ENCODE measurements at regions of chr10 and their contacts with region 1.

Region 1: GRCh38 chr10:111076191-111076681 is 593 bp upstream of the ADRA2A start:
- DNase-seq: peak; percentile 25
- ATAC-seq: peak; percentile 86
- H3K4me3 ChIP-seq: peak overlapping the region; percentile 43 to 64
- H3K27ac ChIP-seq: no peak overlapping the region
- H3K4me1 ChIP-seq: no peaks in the 10 kb centered on the region; the same call in 1 of the 2 replicates
- H3K27me3 ChIP-seq: peaks cover 31% of the 10 kb centered on the region
- CTCF ChIP-seq: peak; percentile 97

Region 2: DNA sequence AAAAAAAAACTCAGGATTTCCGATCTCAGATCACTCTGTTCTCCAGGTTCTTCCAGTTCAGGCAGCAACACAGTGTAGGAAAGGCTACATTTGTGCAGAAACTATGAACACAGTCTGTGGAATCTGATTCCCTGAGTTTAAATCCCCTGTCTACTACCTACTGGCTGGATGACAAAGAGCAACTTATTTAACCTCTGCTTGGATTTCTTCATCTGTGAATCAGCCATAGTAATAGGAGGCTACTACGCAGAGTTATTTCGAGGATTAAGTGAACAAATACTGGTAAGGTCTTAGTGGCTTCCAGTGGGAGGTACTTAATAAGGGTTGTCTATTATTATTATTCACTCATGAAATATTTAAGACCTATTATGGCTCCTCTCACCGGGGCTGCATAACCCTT is 248.8 kb before region 1 on chr10:
- CTCF ChIA-PET with region 1: no interaction called
- POLR2A ChIA-PET with region 1: no interaction called
- in situ Hi-C with region 1: no loop called
- intact Hi-C with region 1: no loop called
- DNase-seq: no peak
- ATAC-seq: no peak
- H3K4me3 ChIP-seq: no peak overlapping the region
- H3K27ac ChIP-seq: no peak overlapping the region
- H3K4me1 ChIP-seq: no peaks in the 10 kb centered on the region
- H3K27me3 ChIP-seq: peaks cover 3% of the 10 kb centered on the region
- CTCF ChIP-seq: no peak

Region 3: GRCh38 chr10:111360260-111360925 is 284.2 kb after region 1 on chr10:
- CTCF ChIA-PET with region 1: no interaction called
- POLR2A ChIA-PET with region 1: no interaction called
- in situ Hi-C with region 1: no loop called
- intact Hi-C with region 1: loop called (anchors 5 kb)
- DNase-seq: peak; percentile 17
- ATAC-seq: peak; percentile 87
- H3K4me3 ChIP-seq: no peak overlapping the region
- H3K27ac ChIP-seq: no peak overlapping the region
- H3K4me1 ChIP-seq: no peaks in the 10 kb centered on the region
- H3K27me3 ChIP-seq: 0 out of 2 replicates have a peak, but pooled peaks cover 2% of the 10 kb centered on the region
- CTCF ChIP-seq: peak; percentile 70

Region 4: GRCh38 chr10:111598436-111599059 is 522.3 kb after region 1 on chr10:
- CTCF ChIA-PET with region 1: no interaction called
- POLR2A ChIA-PET with region 1: no interaction called
- in situ Hi-C with region 1: no loop called
- intact Hi-C with region 1: loop called (anchors 10 kb)
- DNase-seq: peak; percentile 18
- ATAC-seq: peak; percentile 92
- H3K4me3 ChIP-seq: no peak overlapping the region
- H3K27ac ChIP-seq: no peak overlapping the region
- H3K4me1 ChIP-seq: no peaks in the 10 kb centered on the region
- H3K27me3 ChIP-seq: no peaks in the 10 kb centered on the region
- CTCF ChIP-seq: peak; percentile 78

Measured in Panc1 (cell line).